Left colon (tissue), 2 donors: ENCODE measurements at regions of chr7 and their contacts with region 1.

Region 1: GRCh38 chr7:16918288-16918895 is 36.6 kb upstream of the AGR3 start:
- DNase-seq: peak in 1 of 2 donors; percentile 28
- ATAC-seq: no peak

Region 2: DNA sequence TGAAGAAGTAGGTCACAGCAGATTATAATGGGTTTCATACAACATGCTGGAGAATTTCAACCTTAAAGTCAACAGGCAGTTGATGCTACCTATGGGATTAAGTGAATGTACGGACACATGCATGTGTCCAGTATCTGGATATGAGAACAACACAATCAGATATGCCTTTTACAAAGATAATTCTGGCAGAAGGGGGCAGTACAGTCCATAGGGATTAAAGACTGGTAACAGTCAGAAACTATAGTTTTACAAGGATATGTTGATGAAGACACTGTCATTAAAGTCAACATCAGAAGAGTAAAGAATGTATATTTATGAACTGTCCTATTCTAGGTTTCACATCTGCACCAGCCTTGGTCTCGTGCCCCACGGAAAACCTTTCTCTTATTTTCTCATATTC is 314.3 kb before region 1 on chr7:
- intact Hi-C with region 1: loop called in 1 of 2 experiments (anchors 10 kb)
- DNase-seq: no peak
- ATAC-seq: peak; percentile 33